ENCODE measurements at regions of chr5 and their contacts with region 1.

Region 1: DNA sequence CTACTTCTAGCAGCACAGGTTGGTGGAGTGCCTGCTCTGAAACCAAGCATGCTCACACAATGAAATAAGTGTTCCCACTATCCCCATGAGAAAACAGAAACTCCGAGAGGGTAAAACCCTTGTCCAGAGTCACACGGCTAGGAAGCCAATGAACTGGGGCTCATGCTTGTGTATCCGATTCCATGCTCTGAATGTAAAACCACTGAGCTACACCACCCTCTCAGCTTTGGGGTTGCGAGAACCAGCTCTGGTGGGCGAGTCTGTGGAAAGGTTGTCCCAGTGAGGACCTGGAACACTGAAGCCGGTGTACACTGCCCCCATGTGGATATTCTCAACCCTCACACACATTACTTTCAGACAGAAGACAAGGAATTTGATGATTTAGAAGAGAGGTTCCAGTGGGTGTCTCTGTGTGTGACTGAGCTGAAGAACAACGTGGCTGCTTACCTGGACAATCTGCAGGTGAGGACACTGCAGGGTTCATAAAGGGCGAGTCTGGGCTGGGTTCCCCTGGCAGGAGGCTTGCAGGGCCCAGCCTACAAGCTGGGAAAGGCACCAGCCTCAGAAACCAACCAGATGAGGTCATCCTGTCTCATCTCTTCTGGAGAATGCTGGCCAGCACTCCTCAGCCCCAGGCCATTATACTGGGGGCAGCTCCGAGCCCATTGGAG is 37.4 kb downstream of the ARHGEF37 start:
- DNase-seq: peak; percentile 73 to 75
- ATAC-seq: peak; percentile 86 to 96
- H3K4me3 ChIP-seq: no peak overlapping the region
- H3K27ac ChIP-seq: peak overlapping the region; percentile 14 to 33; a peak in 1 of 6 replicates
- H3K4me1 ChIP-seq: peaks cover 9% of the 10 kb centered on the region; the same call in 1 of the 3 replicates
- CTCF ChIP-seq: peak; percentile 90
- EP300 ChIP-seq: no peak
- POLR2A ChIP-seq: no peak
- RAD21 ChIP-seq: peak; percentile 83 to 89

Region 2: DNA sequence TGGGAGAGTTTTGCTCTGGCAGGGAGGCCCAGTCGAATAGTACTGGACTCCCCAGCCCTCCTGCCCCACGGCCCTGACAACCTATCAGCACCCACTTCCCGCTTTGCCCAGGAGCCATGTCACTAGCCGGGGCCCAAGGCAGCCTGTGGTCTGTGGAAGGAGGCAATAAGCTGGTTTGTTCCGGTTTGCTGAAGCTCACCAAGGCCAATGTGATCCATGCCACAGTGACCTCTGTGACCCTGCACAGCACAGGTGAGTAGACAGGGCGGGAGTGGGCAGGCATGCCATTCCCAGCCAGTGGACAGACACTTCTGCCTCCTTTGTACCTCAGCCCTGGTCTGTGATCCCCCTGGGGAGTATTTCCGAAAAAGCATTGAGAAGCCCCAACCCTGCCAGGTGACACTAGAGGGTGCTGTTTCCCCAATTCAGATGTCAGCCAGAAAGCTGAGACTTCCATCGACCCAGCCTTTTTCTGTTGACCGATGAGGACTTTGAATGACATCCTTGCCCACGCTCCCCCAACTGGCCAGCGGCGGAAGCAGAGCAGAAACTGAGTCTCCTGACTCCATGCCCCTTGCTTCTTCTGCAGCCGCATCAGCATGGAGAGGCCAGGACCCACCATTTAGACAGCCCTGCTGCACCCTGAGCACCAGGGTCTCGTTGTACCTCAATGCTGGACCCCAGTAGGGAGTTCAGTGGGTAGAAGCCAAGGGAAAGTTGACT is 251.3 kb before region 1 on chr5:
- CTCF ChIA-PET with region 1: interaction called, 38 read pairs
- POLR2A ChIA-PET with region 1: no interaction called
- DNase-seq: peak; percentile 82 to 96
- ATAC-seq: peak; percentile 71 to 91
- H3K4me3 ChIP-seq: no peak overlapping the region
- H3K27ac ChIP-seq: no peak overlapping the region
- H3K4me1 ChIP-seq: peaks cover 4% of the 10 kb centered on the region; the same call in 1 of the 3 replicates
- CTCF ChIP-seq: peak; percentile 84
- EP300 ChIP-seq: no peak
- POLR2A ChIP-seq: no peak
- RAD21 ChIP-seq: peak; percentile 69 to 79

Region 3: GRCh38 chr5:149567226-149567625 is 51.5 kb before region 1 on chr5:
- CTCF ChIA-PET with region 1: interaction called, 23 read pairs
- POLR2A ChIA-PET with region 1: no interaction called
- DNase-seq: no peak
- ATAC-seq: no peak
- H3K4me3 ChIP-seq: no peak overlapping the region
- H3K27ac ChIP-seq: no peak overlapping the region
- H3K4me1 ChIP-seq: peaks cover 19% of the 10 kb centered on the region
- CTCF ChIP-seq: no peak
- EP300 ChIP-seq: no peak
- POLR2A ChIP-seq: no peak
- RAD21 ChIP-seq: no peak

Region 4: DNA sequence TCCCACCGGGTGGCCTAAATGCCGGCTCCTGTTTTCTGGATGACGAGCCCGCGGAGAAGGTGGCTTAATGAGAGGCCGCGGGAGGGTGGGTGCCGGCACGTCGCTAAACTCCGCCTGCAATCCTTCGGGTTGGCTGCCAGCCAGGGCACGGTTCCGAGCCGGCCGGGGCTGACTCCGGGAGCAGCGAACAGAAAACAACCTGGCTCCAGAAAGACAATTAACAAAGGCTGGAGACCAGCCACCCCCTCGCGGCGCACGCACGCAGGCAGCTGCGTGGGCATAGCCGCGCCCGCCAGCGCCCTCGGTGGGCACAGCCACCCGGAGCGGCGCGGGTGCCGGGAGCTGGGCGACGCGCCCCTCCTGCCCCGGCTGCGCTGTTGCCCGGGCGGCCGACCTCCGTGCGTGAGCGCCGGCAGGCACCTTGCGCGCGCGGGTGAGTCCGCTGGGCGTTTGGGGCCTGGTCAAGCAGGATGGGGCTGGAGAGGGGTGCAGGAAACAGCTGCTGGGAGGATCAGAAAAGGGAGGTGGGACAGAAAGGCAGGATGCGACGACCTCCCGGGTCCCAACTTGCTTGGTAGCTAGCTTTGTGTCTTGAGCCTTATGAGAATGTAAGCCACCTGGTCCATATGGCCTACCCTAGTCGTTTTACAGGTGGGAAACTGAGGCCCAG is 37.4 kb before region 1 on chr5 and contains the start of gene ARHGEF37:
- CTCF ChIA-PET with region 1: interaction called, 40 read pairs
- POLR2A ChIA-PET with region 1: no interaction called
- DNase-seq: peak in 1 of 2 experiments; percentile 42
- ATAC-seq: peak; percentile 90
- H3K4me3 ChIP-seq: peak within 1 kb of the TSS; percentile 58
- H3K27ac ChIP-seq: peak within 1 kb of the TSS; percentile 79 to 83
- H3K4me1 ChIP-seq: peaks cover 15% of the 10 kb centered on the region; the same call in 2 of the 3 replicates
- CTCF ChIP-seq: no peak
- EP300 ChIP-seq: no peak
- POLR2A ChIP-seq: peak; percentile 14; the same call in 1 of the 2 replicates
- RAD21 ChIP-seq: no peak
- polyA plus RNA-seq, gene ARHGEF37: 1.5 and 1.7 TPM in 2 replicates

Region 5: GRCh38 chr5:149596713-149597112 is 22.0 kb before region 1 on chr5:
- CTCF ChIA-PET with region 1: interaction called, 19 read pairs
- POLR2A ChIA-PET with region 1: no interaction called
- DNase-seq: no peak
- ATAC-seq: no peak
- H3K4me3 ChIP-seq: no peak overlapping the region
- H3K27ac ChIP-seq: no peak overlapping the region
- H3K4me1 ChIP-seq: peaks cover 8% of the 10 kb centered on the region; the same call in 2 of the 3 replicates
- CTCF ChIP-seq: no peak
- EP300 ChIP-seq: no peak
- POLR2A ChIP-seq: no peak
- RAD21 ChIP-seq: no peak

Region 6: DNA sequence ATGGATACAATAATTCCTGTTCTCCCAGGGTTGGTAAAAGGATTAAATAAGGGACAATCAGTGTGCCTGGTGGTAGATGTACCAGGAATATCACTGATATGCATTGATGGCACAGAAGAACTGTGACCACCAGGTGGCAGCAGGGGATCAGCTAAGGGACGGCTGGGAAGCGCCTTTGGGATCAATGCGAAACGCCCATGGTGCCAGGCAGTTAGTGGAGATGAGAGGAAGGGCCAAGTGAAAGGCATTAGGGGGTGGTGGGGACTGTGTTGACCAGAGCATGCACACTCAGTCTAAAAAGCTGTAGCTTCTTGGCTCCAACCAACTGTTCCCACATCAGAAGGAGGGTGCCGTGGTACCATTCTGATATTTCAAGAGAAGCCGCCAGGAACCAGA is 18.1 kb after region 1 on chr5:
- CTCF ChIA-PET with region 1: interaction called, 29 read pairs
- POLR2A ChIA-PET with region 1: no interaction called
- DNase-seq: peak; percentile 70 to 72
- ATAC-seq: peak; percentile 79 to 93
- H3K4me3 ChIP-seq: no peak overlapping the region
- H3K27ac ChIP-seq: no peak overlapping the region
- H3K4me1 ChIP-seq: peaks cover 10% of the 10 kb centered on the region; the same call in 2 of the 3 replicates
- CTCF ChIP-seq: peak; percentile 92
- EP300 ChIP-seq: no peak
- POLR2A ChIP-seq: no peak
- RAD21 ChIP-seq: peak; percentile 95 to 96

Region 7: GRCh38 chr5:149680810-149681221 is 62.1 kb after region 1 on chr5:
- CTCF ChIA-PET with region 1: no interaction called
- POLR2A ChIA-PET with region 1: no interaction called
- DNase-seq: no peak
- ATAC-seq: no peak
- H3K4me3 ChIP-seq: no peak overlapping the region
- H3K27ac ChIP-seq: no peak overlapping the region
- H3K4me1 ChIP-seq: no peaks in the 10 kb centered on the region
- CTCF ChIP-seq: no peak
- EP300 ChIP-seq: no peak
- POLR2A ChIP-seq: no peak
- RAD21 ChIP-seq: no peak